Naive thymus-derived CD4-positive, alpha-beta T cell (primary cell): ENCODE measurements at regions of chr17 and their contacts with region 1.

Region 1: DNA sequence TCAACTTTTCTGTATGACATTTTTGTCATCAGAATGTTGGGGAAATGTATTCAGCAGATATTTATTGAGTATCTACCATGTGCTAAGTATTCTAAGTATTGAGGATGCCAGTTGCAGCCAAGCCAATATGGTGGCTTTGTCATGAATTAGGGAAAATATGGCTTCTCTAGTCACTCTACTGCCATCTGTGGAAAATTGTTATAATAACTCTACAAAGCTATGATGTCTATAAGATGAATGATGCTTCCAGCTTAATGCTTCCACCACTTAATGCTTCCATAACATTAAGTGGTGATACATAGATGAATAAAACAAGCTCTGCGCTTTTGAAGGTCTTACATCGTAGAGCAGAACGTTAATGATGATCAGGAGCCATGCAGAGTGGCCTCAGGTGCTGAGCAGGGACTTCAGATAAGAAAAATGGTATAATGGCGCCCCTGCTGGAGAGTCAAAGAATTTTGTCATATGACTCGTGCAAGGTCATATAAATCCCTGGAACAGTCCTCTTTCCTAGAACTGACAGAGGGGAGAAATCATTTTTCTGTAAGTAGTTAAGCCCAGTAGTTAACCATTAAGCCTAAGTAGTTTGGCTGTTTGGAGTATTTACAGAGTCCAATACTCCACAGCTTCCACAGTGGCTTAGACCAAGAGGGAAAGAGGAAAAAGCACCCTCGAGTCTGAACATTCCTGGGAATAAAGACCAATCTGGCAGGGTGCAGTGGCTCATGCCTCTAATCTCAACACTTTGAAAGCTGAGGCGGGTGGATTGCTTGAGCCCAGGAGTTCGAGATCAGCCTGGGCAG is 2.7 kb upstream of the TMIGD1 start:
- DNase-seq: peak; percentile 22 to 80 (median 74)
- ATAC-seq: peak; percentile 63
- H3K4me3 ChIP-seq: no peak overlapping the region
- H3K4me3 Mint-ChIP-seq: no peak overlapping the region
- H3K27ac ChIP-seq: no peak overlapping the region
- H3K27ac Mint-ChIP-seq: peak overlapping the region in 5 of 9 donors; percentile 1 to 69 (median 16)
- H3K4me1 ChIP-seq: peaks cover 11 to 16% of the 10 kb centered on the region in 2 donors
- H3K4me1 Mint-ChIP-seq: peaks cover 13 to 43% (median 36%) of the 10 kb centered on the region in 7 donors
- H3K27me3 ChIP-seq: no peaks in the 10 kb centered on the region
- H3K27me3 Mint-ChIP-seq: peaks cover 0 to 2% (median 0%) of the 10 kb centered on the region in 5 donors

Region 2: DNA sequence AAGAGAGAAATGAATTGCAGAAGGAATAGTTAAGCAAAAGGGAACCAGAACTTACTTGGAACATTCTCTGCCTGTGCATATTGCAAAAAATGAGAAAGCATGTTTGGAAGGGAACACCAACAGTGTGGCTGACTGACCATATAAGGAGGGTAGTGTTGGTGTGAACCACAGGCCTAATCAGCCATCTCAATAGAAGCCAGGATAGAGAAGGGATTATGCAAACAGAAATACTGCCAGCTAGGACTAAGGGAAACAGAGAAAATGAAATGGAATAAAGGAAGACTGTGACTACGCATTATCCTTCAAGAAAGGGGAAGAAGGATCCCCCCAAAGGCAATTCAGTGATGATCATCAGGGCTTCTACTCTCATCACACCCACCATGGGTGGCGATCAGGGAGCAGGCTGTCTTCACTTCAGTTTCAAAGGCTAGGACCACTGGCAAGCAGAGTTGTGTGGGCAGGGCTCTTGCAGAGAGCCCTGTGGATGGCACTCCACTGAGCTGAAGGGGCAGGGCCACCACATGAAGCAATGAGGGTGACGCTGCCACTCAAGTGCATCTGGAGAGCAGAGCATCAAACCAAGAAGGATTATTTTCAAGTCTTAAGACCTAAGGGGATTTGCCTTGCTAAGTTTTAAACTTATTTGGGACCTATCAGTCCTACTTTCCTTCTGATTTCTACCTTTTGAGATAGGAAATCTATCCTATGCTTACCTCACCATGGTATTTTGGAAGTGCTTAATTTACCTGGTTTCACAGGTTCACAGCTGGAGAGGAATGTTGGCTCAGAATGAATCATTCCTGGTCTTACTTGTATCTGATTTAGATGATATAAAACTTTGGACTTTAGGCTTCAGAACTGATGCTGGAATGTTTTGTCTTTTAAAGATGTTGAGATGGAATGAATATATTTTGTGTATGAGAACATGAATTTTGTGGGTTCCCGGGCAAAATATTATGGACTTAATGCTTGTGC is 547.1 kb before region 1 on chr17:
- CTCF ChIA-PET with region 1: no interaction called
- POLR2A ChIA-PET with region 1: no interaction called
- intact Hi-C with region 1: no loop called
- DNase-seq: no peak
- ATAC-seq: no peak
- H3K4me3 ChIP-seq: no peak overlapping the region
- H3K4me3 Mint-ChIP-seq: no peak overlapping the region
- H3K27ac ChIP-seq: no peak overlapping the region
- H3K27ac Mint-ChIP-seq: peak overlapping the region in 3 of 9 donors; percentile 11 to 38 (median 28)
- H3K4me1 ChIP-seq: no peaks in the 10 kb centered on the region
- H3K4me1 Mint-ChIP-seq: peaks cover 0 to 5% (median 0%) of the 10 kb centered on the region in 7 donors
- H3K27me3 ChIP-seq: no peaks in the 10 kb centered on the region
- H3K27me3 Mint-ChIP-seq: no peaks in the 10 kb centered on the region

Region 3: DNA sequence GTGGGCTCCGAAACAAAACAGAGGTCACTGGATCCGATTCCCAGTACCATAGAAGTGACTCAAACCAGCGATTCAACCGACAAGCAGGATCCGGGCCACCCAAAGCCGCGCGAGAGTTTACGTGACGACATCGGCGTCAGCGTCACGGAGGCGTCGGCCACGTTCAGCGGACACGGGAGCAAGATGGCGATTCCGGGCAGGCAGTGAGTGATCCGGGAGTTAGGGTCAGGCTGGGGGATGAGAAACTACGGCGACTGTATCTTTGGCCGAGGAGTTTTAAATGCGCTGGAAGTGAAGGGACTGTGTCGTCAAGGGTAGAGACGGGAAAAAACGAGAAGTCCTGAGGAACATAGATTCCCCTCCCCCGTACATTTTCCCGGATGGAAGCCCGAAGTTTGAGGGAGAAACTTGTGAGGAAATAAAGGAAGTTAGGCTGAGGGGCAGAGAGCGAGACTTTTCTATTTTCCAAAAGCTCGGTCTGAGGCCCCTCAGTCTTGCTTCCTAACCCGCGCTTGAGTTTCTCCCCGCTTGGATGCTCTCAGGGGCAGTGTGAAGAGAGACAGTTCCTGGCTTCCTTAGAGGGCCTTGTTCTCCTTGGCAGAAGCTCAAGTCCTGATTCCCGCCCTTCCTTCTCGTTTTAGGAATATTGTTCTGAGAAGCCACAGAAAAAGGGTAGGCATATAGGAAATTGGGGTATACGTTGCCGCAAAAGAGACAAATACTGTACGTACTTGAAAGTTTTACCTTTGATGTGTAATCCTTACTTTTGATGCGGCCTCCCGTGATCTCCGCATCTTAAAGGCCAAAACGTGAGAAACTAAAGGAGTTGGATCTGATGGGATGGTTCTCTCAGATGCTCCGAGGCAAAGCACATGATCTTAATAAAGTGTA is 219.7 kb before region 1 on chr17 and contains the start of gene NSRP1:
- CTCF ChIA-PET with region 1: interaction called, 6 read pairs
- POLR2A ChIA-PET with region 1: interaction called, 3 read pairs
- intact Hi-C with region 1: loop called (anchors 1 to 5 kb)
- DNase-seq: peak; percentile 82 to 93 (median 90)
- ATAC-seq: peak; percentile 99
- H3K4me3 ChIP-seq: peak within 1 kb of the TSS; percentile 96
- H3K4me3 Mint-ChIP-seq: peak within 1 kb of the TSS; percentile 91 to 100 (median 98)
- H3K27ac ChIP-seq: peak within 1 kb of the TSS; percentile 97
- H3K27ac Mint-ChIP-seq: peak within 1 kb of the TSS; percentile 97 to 100 (median 100)
- H3K4me1 ChIP-seq: peaks cover 3 to 10% of the 10 kb centered on the region in 2 donors
- H3K4me1 Mint-ChIP-seq: peaks cover 20 to 57% (median 48%) of the 10 kb centered on the region in 7 donors
- H3K27me3 ChIP-seq: no peaks in the 10 kb centered on the region
- H3K27me3 Mint-ChIP-seq: no peaks in the 10 kb centered on the region
- total RNA-seq, gene NSRP1: 25.6 to 34.7 (median 29.3) TPM

Region 4: GRCh38 chr17:30291543-30292285 is 44.9 kb before region 1 on chr17 and contains the start of gene BLMH:
- CTCF ChIA-PET with region 1: interaction called, 19 read pairs
- POLR2A ChIA-PET with region 1: interaction called, 26 read pairs
- intact Hi-C with region 1: loop called (anchors 1 to 2 kb)
- DNase-seq: peak; percentile 58 to 89 (median 66)
- ATAC-seq: peak; percentile 90
- H3K4me3 ChIP-seq: peak within 1 kb of the TSS; percentile 77
- H3K4me3 Mint-ChIP-seq: peak within 1 kb of the TSS in 8 of 10 donors; percentile 92 to 97 (median 94)
- H3K27ac ChIP-seq: peak within 1 kb of the TSS; percentile 63
- H3K27ac Mint-ChIP-seq: peak within 1 kb of the TSS; percentile 44 to 91 (median 85)
- H3K4me1 ChIP-seq: peaks cover 9% of the 10 kb centered on the region in 2 donors
- H3K4me1 Mint-ChIP-seq: peaks cover 5 to 22% (median 19%) of the 10 kb centered on the region in 7 donors
- H3K27me3 ChIP-seq: no peaks in the 10 kb centered on the region
- H3K27me3 Mint-ChIP-seq: no peaks in the 10 kb centered on the region
- total RNA-seq, gene BLMH: 26.8 to 57.5 (median 40.1) TPM

Region 5: DNA sequence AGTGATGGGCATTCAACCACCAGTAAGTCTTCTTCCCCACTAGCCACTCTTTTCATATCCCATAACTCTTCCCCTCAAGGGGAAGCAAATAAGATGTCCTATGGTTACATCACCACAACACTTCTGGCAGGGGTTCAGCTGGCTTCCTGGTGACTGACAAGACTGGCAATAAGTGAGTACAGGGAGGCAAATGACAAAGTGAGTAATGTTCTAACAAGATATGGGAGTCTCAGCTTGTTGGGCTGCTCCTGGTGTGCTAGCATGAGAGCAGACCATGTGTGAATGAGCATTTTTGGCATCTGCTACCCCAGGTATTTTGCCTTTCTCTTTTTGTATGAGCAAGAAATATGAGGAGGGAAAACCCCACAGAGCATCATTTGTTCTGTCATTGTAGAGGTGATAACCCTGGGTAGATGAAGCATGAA is 12.7 kb before region 1 on chr17:
- CTCF ChIA-PET with region 1: interaction called, 37 read pairs
- POLR2A ChIA-PET with region 1: interaction called, 39 read pairs
- intact Hi-C with region 1: loop called in 1 of 2 experiments (anchors 1 kb)
- DNase-seq: peak in 5 of 9 donors; percentile 28 to 46 (median 38)
- ATAC-seq: peak; percentile 64
- H3K4me3 ChIP-seq: peak overlapping the region; percentile 14
- H3K4me3 Mint-ChIP-seq: peak overlapping the region in 9 of 10 donors; percentile 26 to 67 (median 62)
- H3K27ac ChIP-seq: peak overlapping the region; percentile 60
- H3K27ac Mint-ChIP-seq: peak overlapping the region; percentile 2 to 95 (median 88)
- H3K4me1 ChIP-seq: peaks cover 24 to 32% of the 10 kb centered on the region in 2 donors
- H3K4me1 Mint-ChIP-seq: peaks cover 15 to 46% (median 32%) of the 10 kb centered on the region in 7 donors
- H3K27me3 ChIP-seq: no peaks in the 10 kb centered on the region
- H3K27me3 Mint-ChIP-seq: peaks cover 0 to 7% (median 0%) of the 10 kb centered on the region in 5 donors

Region 6: DNA sequence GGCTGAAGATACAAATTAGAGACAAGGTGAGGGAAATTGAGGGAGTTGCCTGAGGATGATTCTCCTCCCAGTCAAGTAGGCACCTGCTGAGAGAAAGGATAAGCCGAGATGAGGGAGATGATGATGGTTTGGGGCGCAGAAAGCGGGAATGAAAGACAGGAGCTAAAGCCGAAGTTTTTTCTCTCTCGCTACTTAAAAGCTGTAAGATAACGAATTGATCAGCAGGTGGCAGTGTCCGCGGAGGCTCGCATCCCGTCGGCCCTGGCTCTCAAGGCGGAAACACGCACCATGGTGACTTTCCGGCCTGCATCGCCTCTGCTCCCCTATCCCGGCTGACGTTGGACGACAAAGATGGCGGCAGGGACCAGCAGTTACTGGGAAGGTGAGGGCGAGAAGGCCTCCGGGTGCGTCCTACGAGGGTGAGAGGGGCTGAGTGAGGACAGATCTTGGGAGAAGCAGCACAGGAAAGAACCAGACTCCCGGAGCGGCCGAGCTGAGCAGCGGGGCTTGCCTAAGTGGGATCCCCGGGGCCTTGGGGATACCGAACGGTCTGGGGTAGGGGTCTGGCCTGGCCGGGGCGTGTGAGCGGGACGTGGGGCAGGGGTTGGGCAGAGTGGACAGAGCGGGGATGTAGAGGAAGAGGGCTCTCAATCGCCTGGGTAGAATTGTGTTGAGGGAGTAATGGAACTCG is 140.7 kb after region 1 on chr17 and contains the start of gene GOSR1:
- CTCF ChIA-PET with region 1: interaction called, 4 read pairs
- POLR2A ChIA-PET with region 1: no interaction called
- intact Hi-C with region 1: loop called in 1 of 2 experiments (anchors 2 kb)
- DNase-seq: peak; percentile 78 to 92 (median 90)
- ATAC-seq: peak; percentile 99
- H3K4me3 ChIP-seq: peak within 1 kb of the TSS; percentile 82
- H3K4me3 Mint-ChIP-seq: peak within 1 kb of the TSS; percentile 92 to 99 (median 97)
- H3K27ac ChIP-seq: peak within 1 kb of the TSS; percentile 100
- H3K27ac Mint-ChIP-seq: peak within 1 kb of the TSS; percentile 94 to 99 (median 99)
- H3K4me1 ChIP-seq: peaks cover 11 to 13% of the 10 kb centered on the region in 2 donors
- H3K4me1 Mint-ChIP-seq: peaks cover 18 to 59% (median 47%) of the 10 kb centered on the region in 7 donors
- H3K27me3 ChIP-seq: no peaks in the 10 kb centered on the region
- H3K27me3 Mint-ChIP-seq: peaks cover 0 to 7% (median 2%) of the 10 kb centered on the region in 5 donors
- total RNA-seq, gene GOSR1: 45.1 to 70.8 (median 62.9) TPM

Region 7: GRCh38 chr17:30565073-30565935 is 228.7 kb after region 1 on chr17:
- CTCF ChIA-PET with region 1: no interaction called
- POLR2A ChIA-PET with region 1: no interaction called
- intact Hi-C with region 1: no loop called
- DNase-seq: no peak
- ATAC-seq: no peak
- H3K4me3 ChIP-seq: no peak overlapping the region
- H3K4me3 Mint-ChIP-seq: no peak overlapping the region
- H3K27ac ChIP-seq: no peak overlapping the region
- H3K27ac Mint-ChIP-seq: no peak overlapping the region
- H3K4me1 ChIP-seq: no peaks in the 10 kb centered on the region
- H3K4me1 Mint-ChIP-seq: peaks cover 0 to 3% (median 0%) of the 10 kb centered on the region in 7 donors
- H3K27me3 ChIP-seq: no peaks in the 10 kb centered on the region
- H3K27me3 Mint-ChIP-seq: peaks cover 0 to 10% (median 0%) of the 10 kb centered on the region in 5 donors